Activated CD4-positive, alpha-beta T cell treated with anti-CD3 and anti-CD28 coated beads for 36 hours (primary cell): ENCODE measurements at regions of chr4 and their contacts with region 1.

Region 1: GRCh38 chr4:123466080-123466785 is 69.6 kb downstream of the SPRY1 start:
- DNase-seq: peak; percentile 18
- ATAC-seq: peak; percentile 76
- H3K4me3 Mint-ChIP-seq: no peak overlapping the region
- H3K27ac Mint-ChIP-seq: no peak overlapping the region
- H3K4me1 Mint-ChIP-seq: peaks cover 11% of the 10 kb centered on the region
- H3K27me3 Mint-ChIP-seq: peaks cover 3% of the 10 kb centered on the region

Region 2: DNA sequence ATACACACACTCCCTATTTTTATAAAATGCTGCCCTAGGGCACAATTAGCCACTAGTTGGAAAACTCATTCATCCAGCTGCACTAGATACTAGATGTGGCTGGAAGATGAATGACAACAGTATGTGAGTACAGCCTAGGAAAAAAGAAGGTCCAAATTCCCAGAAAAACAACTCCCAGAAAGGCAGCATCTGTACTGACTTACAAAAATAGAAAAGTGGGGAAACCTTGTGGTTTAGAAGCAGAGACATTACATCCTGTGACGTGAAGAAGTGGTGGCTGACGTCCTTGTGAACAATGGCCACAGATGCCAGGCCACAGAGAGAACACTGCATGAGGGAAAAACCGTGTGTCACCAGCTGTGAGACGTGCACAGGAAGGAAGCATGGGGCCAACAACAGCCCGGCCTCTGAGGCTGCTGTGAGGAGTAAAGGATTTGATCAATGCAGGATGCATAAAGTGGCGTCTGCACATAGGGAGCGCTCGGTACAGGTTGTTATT is 11.5 kb after region 1 on chr4:
- CTCF ChIA-PET with region 1: interaction called, 3 read pairs
- POLR2A ChIA-PET with region 1: interaction called, 3 read pairs
- intact Hi-C with region 1: loop called in 1 of 2 experiments (anchors 2 kb)
- DNase-seq: peak; percentile 81
- ATAC-seq: peak; percentile 96
- H3K4me3 Mint-ChIP-seq: peak overlapping the region; percentile 33
- H3K27ac Mint-ChIP-seq: peak overlapping the region; percentile 53
- H3K4me1 Mint-ChIP-seq: peaks cover 37% of the 10 kb centered on the region
- H3K27me3 Mint-ChIP-seq: no peaks in the 10 kb centered on the region

Region 3: GRCh38 chr4:124266721-124267120 is 800.5 kb after region 1 on chr4:
- CTCF ChIA-PET with region 1: no interaction called
- POLR2A ChIA-PET with region 1: no interaction called
- intact Hi-C with region 1: no loop called
- DNase-seq: no peak
- ATAC-seq: no peak
- H3K4me3 Mint-ChIP-seq: no peak overlapping the region
- H3K27ac Mint-ChIP-seq: no peak overlapping the region
- H3K4me1 Mint-ChIP-seq: no peaks in the 10 kb centered on the region
- H3K27me3 Mint-ChIP-seq: peaks cover 2% of the 10 kb centered on the region